Aorta (tissue), 5 donors: ENCODE measurements at regions of chrX and their contacts with region 1.

Region 1: GRCh38 chrX:7028246-7028645 is 119.3 kb upstream of the STS start:
- DNase-seq: no peak
- ATAC-seq: no peak
- H3K4me3 ChIP-seq: no peak overlapping the region
- H3K27ac ChIP-seq: no peak overlapping the region
- H3K4me1 ChIP-seq: no peaks in the 10 kb centered on the region
- H3K27me3 ChIP-seq: no peaks in the 10 kb centered on the region

Region 2: GRCh38 chrX:7680181-7680580 is 651.9 kb after region 1 on chrX:
- intact Hi-C with region 1: loop called in 1 of 2 experiments (anchors 10 kb)
- DNase-seq: no peak
- ATAC-seq: no peak
- H3K4me3 ChIP-seq: no peak overlapping the region
- H3K27ac ChIP-seq: no peak overlapping the region
- H3K4me1 ChIP-seq: no peaks in the 10 kb centered on the region
- H3K27me3 ChIP-seq: no peaks in the 10 kb centered on the region